ENCODE measurements at regions of chr7 and their contacts with region 1.

Region 1: GRCh38 chr7:37234928-37235327 is 213.7 kb downstream of the ELMO1 start:
- DNase-seq: peak; percentile 19
- ATAC-seq: no peak
- H3K4me3 Mint-ChIP-seq: no peak overlapping the region
- H3K27ac Mint-ChIP-seq: no peak overlapping the region
- H3K4me1 Mint-ChIP-seq: peaks cover 16% of the 10 kb centered on the region
- H3K27me3 Mint-ChIP-seq: no peaks in the 10 kb centered on the region

Region 2: GRCh38 chr7:37173670-37174069 is 61.3 kb before region 1 on chr7:
- CTCF ChIA-PET with region 1: no interaction called
- POLR2A ChIA-PET with region 1: no interaction called
- intact Hi-C with region 1: no loop called
- DNase-seq: no peak
- ATAC-seq: no peak
- H3K4me3 Mint-ChIP-seq: no peak overlapping the region
- H3K27ac Mint-ChIP-seq: no peak overlapping the region
- H3K4me1 Mint-ChIP-seq: peaks cover 2% of the 10 kb centered on the region
- H3K27me3 Mint-ChIP-seq: no peaks in the 10 kb centered on the region

Region 3: DNA sequence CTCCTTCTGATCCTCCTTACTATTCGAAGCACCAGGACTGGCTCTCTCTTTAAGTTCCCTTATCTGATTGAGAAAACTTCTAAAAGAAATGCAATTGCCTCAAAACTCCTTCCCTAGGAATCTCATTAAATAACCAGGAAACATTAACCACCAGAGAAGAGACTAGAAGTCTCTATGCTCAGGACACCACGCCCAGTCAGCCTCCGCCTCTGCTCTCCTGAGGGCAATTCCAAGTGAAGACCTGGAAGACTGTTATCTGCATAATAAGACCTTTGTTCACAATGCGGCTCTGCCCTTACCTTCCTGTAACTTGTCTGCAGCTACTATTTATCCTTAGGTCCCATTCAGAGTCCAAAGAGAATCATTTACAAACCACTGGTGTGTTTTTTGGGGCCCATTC is 135.0 kb after region 1 on chr7:
- CTCF ChIA-PET with region 1: no interaction called
- POLR2A ChIA-PET with region 1: no interaction called
- intact Hi-C with region 1: no loop called
- DNase-seq: no peak
- ATAC-seq: no peak
- H3K4me3 Mint-ChIP-seq: no peak overlapping the region
- H3K27ac Mint-ChIP-seq: no peak overlapping the region
- H3K4me1 Mint-ChIP-seq: peaks cover 72% of the 10 kb centered on the region
- H3K27me3 Mint-ChIP-seq: no peaks in the 10 kb centered on the region

Region 4: DNA sequence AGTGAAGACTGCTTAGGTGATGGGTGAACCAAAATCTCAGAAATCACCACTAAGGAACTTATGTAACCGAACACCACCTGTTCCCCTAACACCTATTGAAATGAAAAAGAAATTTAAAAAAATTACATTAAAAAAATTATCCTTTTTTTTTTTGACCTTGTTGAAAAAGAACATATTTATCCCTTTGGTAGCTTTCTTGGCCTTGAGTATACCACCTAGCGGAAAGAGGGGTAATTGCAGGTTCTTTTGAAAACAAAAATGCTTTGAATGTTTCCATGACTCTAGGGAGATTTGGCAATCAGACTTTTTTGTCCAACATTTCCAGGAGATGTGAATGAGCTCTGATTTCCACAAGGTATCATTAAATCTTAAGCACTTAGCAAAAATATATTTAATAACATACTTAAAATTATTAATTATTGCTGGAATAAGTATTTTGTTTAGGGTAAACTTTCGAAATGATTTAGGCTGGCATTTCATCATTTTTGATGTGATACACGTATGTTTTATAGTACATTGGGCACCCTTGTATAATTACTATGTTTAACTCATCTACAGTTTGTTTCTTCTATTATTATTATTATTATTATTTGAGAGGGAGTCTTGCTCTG is 260.8 kb after region 1 on chr7:
- CTCF ChIA-PET with region 1: interaction called, 36 read pairs
- POLR2A ChIA-PET with region 1: no interaction called
- intact Hi-C with region 1: loop called (anchors 1 to 5 kb)
- DNase-seq: no peak
- ATAC-seq: no peak
- H3K4me3 Mint-ChIP-seq: no peak overlapping the region
- H3K27ac Mint-ChIP-seq: no peak overlapping the region
- H3K4me1 Mint-ChIP-seq: peaks cover 8% of the 10 kb centered on the region
- H3K27me3 Mint-ChIP-seq: no peaks in the 10 kb centered on the region

Region 5: DNA sequence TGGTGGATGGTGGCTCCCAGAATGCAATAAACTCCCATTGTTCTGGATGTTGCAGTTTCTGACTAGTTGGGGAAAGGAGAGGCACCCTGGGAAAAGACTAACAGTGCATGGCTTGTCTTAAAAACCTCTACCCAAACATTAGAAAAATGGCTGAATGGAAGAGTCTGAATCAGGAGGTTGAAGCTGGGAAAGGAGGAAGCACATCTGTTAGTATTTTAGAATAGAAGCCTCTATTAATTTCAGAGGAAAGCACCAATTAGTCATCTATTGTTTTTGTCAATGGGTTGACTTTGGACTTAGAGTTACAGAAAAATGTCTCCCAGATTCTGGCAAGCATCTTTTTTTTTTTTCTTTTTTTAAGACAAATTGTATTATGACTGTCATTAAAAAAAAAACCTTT is 269.9 kb after region 1 on chr7:
- CTCF ChIA-PET with region 1: interaction called, 27 read pairs
- POLR2A ChIA-PET with region 1: no interaction called
- intact Hi-C with region 1: no loop called
- DNase-seq: no peak
- ATAC-seq: no peak
- H3K4me3 Mint-ChIP-seq: no peak overlapping the region
- H3K27ac Mint-ChIP-seq: no peak overlapping the region
- H3K4me1 Mint-ChIP-seq: no peaks in the 10 kb centered on the region
- H3K27me3 Mint-ChIP-seq: peaks cover 2% of the 10 kb centered on the region

Region 6: DNA sequence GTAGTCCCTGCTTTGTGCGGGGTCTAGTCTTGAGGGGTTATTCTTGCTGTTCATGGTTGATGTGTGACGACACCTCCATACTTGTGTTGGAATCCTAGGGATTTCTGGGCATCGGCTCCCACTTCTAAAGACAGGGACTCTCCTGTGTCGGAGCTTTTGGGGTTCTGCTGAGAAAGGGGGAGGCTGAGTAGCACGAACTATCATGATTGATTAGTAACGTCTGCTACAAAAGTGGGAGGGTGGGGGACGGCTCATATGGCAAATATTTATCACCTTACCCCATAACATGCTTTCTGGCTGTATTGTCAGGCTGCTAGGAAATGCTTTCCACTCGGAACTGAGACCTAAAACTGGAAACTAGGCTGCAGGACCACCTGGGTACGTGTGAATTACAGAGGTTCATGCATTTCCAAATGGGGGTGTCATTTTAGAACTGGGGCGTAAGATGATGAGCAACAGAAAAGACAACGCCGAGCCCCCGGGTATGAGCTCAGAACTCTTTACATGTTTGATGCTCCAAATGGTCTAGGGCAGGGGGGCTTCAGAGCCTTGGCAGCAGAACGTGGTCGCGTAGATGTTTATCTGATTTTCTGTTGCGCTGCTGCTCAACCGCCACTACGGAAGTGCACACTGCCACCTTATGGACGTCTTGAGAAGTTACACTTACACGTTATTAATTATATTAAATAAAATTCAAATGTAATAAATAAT is 598.3 kb after region 1 on chr7:
- CTCF ChIA-PET with region 1: no interaction called
- POLR2A ChIA-PET with region 1: no interaction called
- intact Hi-C with region 1: loop called in 1 of 2 experiments (anchors 10 kb)
- DNase-seq: peak; percentile 61
- ATAC-seq: no peak
- H3K4me3 Mint-ChIP-seq: peak overlapping the region; percentile 67
- H3K27ac Mint-ChIP-seq: no peak overlapping the region
- H3K4me1 Mint-ChIP-seq: peaks cover 4% of the 10 kb centered on the region
- H3K27me3 Mint-ChIP-seq: peaks cover 5% of the 10 kb centered on the region